ENCODE measurements at regions of chr4 and their contacts with region 1.

Region 1: GRCh38 chr4:86895692-86896488 is 3.7 kb upstream of the C4orf36 start:
- DNase-seq: no peak
- ATAC-seq: peak; percentile 46 to 75 (median 56)
- H3K4me3 ChIP-seq: no peak overlapping the region
- H3K27ac ChIP-seq: no peak overlapping the region
- H3K4me1 ChIP-seq: peaks cover 11% of the 10 kb centered on the region
- H3K27me3 ChIP-seq: no peaks in the 10 kb centered on the region
- CTCF ChIP-seq: peak; percentile 81

Region 2: GRCh38 chr4:86593688-86594558 is 302.0 kb before region 1 on chr4 and contains the start of gene PTPN13:
- intact Hi-C with region 1: loop called in 1 of 2 experiments (anchors 10 kb)
- DNase-seq: peak; percentile 93 to 94
- ATAC-seq: peak; percentile 85 to 95 (median 94)
- H3K4me3 ChIP-seq: peak within 1 kb of the TSS; percentile 67
- H3K27ac ChIP-seq: peak within 1 kb of the TSS; percentile 57
- H3K4me1 ChIP-seq: no peaks in the 10 kb centered on the region
- H3K27me3 ChIP-seq: peaks cover 0 to 48% (median 6%) of the 10 kb centered on the region in 3 donors
- CTCF ChIP-seq: no peak
- total RNA-seq, gene PTPN13: 0.89 to 2.4 (median 1.2) TPM

Measured in psoas muscle (tissue), 8 donors.